ENCODE measurements at regions of chr21 and their contacts with region 1.

Region 1: GRCh38 chr21:29372063-29372802 is 73.5 kb downstream of the BACH1 start:
- DNase-seq: peak in 1 of 2 experiments; percentile 48
- H3K4me3 ChIP-seq: no peak overlapping the region
- H3K27ac ChIP-seq: no peak overlapping the region
- H3K4me1 ChIP-seq: no peaks in the 10 kb centered on the region; a peak in 1 of 7 replicates
- H3K27me3 ChIP-seq: no peaks in the 10 kb centered on the region
- CTCF ChIP-seq: peak in 2 of 3 experiments; percentile 70 to 74; a peak in 3 of 4 replicates
- EP300 ChIP-seq: no peak
- POLR2A ChIP-seq: no peak
- RAD21 ChIP-seq: peak; percentile 87 to 89

Region 2: GRCh38 chr21:29091032-29091431 is 281.2 kb before region 1 on chr21:
- CTCF ChIA-PET with region 1: interaction called, 23 read pairs
- POLR2A ChIA-PET with region 1: no interaction called
- DNase-seq: no peak
- H3K4me3 ChIP-seq: no peak overlapping the region
- H3K27ac ChIP-seq: no peak overlapping the region
- H3K4me1 ChIP-seq: peaks cover 0 to 4% (median 0%) of the 10 kb centered on the region in 4 experiments; a peak in 1 of 7 replicates
- H3K27me3 ChIP-seq: no peaks in the 10 kb centered on the region; a peak in 1 of 7 replicates
- CTCF ChIP-seq: no peak
- EP300 ChIP-seq: no peak
- POLR2A ChIP-seq: no peak
- RAD21 ChIP-seq: no peak

Region 3: GRCh38 chr21:29351691-29352090 is 20.5 kb before region 1 on chr21:
- CTCF ChIA-PET with region 1: interaction called, 20 read pairs
- POLR2A ChIA-PET with region 1: no interaction called
- DNase-seq: no peak
- H3K4me3 ChIP-seq: no peak overlapping the region
- H3K27ac ChIP-seq: no peak overlapping the region
- H3K4me1 ChIP-seq: no peaks in the 10 kb centered on the region
- H3K27me3 ChIP-seq: no peaks in the 10 kb centered on the region
- CTCF ChIP-seq: no peak
- EP300 ChIP-seq: no peak
- POLR2A ChIP-seq: no peak
- RAD21 ChIP-seq: no peak

Region 4: DNA sequence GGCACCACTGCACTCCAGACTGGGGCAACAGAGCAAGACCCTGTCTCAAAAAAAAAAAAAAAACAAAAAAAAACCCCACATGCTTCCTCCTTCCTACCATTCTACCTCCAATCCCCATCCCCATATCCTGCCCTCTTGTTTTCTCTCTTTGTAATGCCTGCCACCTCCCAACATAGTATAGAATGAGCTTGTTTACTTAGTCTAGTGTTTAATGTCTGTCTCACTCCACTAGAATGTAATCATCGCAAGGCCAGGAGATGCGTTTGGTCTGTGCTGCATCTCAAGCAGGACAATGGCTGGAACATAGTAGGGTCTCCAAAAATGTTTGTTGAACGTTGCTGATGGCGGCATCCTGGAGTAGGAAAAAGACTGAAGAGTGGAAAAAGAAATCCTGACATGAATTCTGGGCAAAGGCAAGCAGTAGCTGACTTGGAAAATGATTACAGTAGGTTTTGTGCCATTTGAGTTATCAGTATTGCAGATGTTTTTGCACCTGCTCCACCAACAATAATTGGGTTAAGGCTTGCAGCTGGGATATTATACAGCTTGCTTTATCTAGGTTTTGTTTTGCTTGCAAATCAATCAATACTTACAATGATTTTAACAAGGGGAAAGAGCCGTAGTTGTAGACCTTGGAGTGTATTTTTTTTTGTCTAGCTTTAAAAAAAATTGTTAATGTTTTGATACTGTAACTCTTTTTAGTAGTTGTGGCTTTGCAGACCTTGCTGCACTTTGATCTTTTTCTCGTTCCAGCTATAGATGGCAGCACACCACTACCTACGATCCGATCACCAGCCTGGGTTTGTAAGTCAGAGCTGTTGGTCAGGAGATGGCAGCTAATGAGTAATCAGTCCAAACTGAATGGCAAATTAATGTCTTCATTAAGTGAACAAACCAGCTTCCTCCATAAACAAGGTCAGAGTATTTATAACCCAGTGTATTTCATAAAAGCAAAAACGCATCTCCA is 11.2 kb before region 1 on chr21:
- CTCF ChIA-PET with region 1: interaction called, 42 read pairs
- POLR2A ChIA-PET with region 1: no interaction called
- DNase-seq: no peak
- H3K4me3 ChIP-seq: no peak overlapping the region
- H3K27ac ChIP-seq: no peak overlapping the region
- H3K4me1 ChIP-seq: no peaks in the 10 kb centered on the region
- H3K27me3 ChIP-seq: no peaks in the 10 kb centered on the region
- CTCF ChIP-seq: peak in 2 of 3 experiments; percentile 11 to 20; a peak in 3 of 4 replicates
- EP300 ChIP-seq: no peak
- POLR2A ChIP-seq: no peak
- RAD21 ChIP-seq: peak; percentile 49 to 59; a peak in 3 of 4 replicates

Region 5: DNA sequence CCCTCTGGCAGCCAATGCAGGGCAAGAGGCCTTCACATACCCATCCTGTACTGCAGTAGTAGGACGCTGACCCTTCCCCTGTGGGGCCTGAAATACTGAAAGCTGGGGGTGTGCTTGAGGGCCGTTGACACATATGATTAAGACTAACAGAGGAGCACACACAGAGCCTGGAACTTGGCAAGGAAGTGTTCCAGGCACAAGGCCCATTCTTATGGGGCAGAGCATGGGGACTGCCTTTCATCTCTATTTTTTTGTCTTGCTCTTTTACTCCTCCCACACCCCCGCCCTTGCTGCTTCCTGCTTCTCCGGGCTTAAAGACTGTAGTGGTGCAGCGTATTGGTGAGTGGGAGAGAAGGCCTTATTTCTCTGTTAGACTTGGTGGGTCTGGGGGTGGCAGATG is 63.9 kb after region 1 on chr21:
- CTCF ChIA-PET with region 1: no interaction called
- POLR2A ChIA-PET with region 1: no interaction called
- DNase-seq: no peak
- H3K4me3 ChIP-seq: no peak overlapping the region
- H3K27ac ChIP-seq: no peak overlapping the region
- H3K4me1 ChIP-seq: peaks cover 0 to 3% (median 0%) of the 10 kb centered on the region in 4 experiments; a peak in 1 of 7 replicates
- H3K27me3 ChIP-seq: no peaks in the 10 kb centered on the region
- CTCF ChIP-seq: no peak
- EP300 ChIP-seq: no peak
- POLR2A ChIP-seq: no peak
- RAD21 ChIP-seq: no peak